GM18951 (cell line): ENCODE measurements at regions of chr6 and their contacts with region 1.

Region 1: DNA sequence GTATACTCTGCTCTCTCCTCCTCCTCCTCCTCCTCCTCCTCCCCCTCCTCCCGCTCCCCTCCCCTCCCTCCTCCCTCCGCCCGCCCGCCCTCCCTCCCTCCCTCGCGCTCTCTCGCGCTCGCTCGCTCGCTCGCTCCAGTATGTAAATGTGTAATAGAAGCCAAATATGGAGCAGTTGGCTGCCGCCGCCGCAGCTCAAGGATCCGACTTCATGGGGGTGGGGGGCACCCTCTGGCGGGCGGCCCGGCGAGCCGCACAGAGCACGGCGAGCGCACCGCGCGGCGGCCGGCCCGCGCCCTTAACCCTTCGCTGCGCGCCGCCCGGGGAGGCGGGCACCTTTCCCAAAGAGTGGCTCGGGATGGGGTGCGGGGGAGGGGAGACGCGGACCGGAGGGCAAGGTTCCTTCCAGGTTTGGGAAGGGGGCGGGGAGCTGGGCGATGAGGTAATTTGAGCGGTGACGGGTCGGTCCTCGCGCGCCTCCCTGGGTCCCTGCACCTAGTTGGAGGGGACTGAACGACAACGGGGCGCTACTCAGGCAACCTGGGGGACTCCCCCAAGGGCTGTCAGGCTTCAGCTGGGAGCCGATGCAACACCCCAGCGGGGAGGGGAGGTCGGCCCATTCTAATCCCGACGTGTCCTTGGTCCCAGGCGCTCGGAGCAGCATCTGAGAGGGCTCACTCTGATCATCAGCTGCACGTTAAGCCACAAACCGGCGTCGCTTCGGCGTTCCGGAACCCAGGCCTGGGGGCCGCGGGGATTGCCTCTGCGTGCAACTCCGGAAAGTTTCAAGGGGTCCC is 409 bp upstream of the ATXN1 start:
- POLR2A ChIP-seq: no peak

Region 2: GRCh38 chr6:15200087-15200486 is 1561.6 kb before region 1 on chr6:
- in situ Hi-C with region 1: no loop called
- POLR2A ChIP-seq: no peak

Region 3: DNA sequence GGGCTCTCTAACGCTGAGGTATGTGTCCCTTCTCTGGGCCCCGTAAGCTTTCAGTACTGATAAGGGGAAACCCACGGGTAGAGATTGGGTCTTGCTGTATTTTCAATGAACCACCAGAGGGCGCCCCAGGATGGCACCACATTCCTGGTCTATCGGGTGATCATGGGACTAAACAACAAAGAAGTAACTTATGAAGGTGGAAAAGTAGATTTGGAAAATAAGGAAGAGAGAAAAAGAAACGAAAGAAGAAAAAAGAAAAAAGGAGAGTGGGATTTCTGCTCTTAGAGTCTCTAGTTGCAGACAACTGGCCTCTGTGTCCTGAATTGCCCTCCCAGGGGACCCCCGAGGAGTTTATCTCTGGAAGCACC is 429.5 kb before region 1 on chr6:
- in situ Hi-C with region 1: loop called (anchors 10 kb)
- POLR2A ChIP-seq: no peak

Region 4: DNA sequence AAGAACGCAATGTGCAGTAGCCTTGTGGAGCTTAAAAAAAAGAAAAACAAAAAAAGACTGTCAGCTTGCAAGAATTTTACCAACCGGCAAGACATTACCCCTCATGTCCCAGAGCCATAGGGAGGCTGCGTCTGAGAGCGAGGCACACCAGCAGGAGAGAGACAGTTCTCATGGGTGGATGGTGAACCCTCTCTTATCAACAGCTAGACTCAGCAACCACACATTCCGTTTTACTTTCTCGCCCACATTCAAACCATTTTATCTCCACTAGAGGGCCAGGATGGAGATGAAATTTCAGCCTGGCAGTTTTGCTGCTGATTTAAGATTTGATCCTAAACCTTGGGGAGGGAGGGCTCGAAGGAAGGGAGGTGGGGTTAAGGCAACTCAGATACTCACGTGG is 247.4 kb before region 1 on chr6:
- in situ Hi-C with region 1: loop called (anchors 10 kb)
- POLR2A ChIP-seq: no peak

Region 5: GRCh38 chr6:16533721-16534136 is 227.9 kb before region 1 on chr6:
- in situ Hi-C with region 1: loop called (anchors 10 kb)
- POLR2A ChIP-seq: no peak

Region 6: DNA sequence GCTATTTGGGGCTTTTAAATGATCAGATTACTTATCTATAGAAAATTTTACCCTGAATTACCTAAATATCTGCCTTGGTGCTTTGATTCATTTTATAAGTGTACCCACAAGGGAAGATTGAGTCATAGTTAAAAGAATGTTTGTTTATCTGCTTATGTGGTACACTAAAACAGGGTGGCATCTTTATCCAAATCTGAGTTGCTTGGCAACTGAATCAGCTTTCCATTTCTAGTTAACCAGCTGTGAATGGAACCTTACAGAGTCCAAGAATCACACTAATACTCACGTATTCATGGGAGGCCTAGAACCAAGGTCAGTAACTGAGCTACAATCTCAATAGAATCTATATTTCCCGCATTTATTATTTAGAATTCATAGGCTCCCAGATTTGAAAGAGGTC is 587.8 kb after region 1 on chr6:
- in situ Hi-C with region 1: no loop called
- POLR2A ChIP-seq: no peak

Region 7: DNA sequence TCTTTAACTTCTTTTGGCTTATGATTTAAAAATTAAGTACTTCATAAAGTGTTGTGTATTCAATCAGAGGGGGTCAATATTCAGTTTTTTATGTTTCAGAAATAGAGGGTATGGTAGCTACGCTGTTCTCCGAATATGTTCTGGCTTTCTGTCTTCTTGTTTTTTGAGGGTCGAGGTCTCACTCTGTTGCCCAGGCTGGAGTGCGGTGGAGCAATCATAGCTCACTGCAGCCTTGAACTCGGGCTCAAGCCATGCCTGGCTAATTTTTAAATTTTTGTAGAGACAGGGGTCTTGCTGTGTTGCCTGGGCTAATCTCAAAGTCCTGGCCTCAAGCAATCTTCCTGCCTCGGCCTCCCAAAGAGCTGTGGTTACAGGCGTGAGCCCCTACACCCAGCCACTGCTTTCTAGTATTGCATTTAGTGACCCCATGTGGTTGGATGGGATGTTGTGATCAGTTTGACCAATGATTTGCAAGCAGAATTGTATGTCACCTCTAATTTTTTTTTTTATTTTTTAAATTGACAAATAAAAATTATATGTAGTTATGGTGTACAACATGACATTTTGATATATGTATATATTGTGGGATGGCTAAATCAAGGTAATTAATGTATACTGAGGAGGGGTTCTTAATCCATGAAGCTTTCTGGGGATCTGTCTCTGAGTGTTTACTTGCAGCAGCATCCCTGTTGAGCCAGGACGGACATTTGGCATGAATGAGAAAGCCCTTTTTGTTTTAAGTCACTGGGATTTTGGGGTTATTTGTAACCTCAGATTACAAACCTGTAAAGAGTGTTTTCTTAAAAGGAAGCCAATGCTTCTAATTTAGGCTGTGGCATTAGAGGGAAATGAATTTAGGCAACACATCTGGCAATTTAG is 1541.1 kb after region 1 on chr6:
- in situ Hi-C with region 1: no loop called
- POLR2A ChIP-seq: no peak